Heart right ventricle (tissue), 16 donors: ENCODE measurements at regions of chr13 and their contacts with region 1.

Region 1: DNA sequence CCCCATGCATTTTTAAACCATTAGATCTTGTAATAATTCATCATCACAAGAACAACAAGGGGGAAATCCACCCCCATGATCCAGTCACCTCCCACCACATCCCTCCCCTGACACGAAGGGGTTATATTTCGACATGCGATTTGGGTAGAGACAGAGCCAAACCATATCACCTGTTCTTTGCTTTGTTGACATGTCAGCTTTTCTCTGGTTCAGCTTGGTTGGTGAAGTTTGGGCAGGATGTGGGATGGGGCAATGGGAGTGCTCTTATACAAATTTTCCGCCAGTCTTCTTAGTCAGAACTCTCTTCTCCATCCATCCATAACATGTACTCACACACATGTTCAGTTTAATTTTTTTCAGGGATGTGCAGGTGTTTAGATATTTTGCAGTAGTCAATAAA is 12.9 kb downstream of the TPP2 start:
- DNase-seq: no peak
- ATAC-seq: no peak
- H3K4me3 ChIP-seq: no peak overlapping the region
- H3K27ac ChIP-seq: no peak overlapping the region
- H3K4me1 ChIP-seq: peaks cover 0 to 32% (median 8%) of the 10 kb centered on the region in 9 donors
- H3K27me3 ChIP-seq: no peaks in the 10 kb centered on the region
- CTCF ChIP-seq: no peak

Region 2: DNA sequence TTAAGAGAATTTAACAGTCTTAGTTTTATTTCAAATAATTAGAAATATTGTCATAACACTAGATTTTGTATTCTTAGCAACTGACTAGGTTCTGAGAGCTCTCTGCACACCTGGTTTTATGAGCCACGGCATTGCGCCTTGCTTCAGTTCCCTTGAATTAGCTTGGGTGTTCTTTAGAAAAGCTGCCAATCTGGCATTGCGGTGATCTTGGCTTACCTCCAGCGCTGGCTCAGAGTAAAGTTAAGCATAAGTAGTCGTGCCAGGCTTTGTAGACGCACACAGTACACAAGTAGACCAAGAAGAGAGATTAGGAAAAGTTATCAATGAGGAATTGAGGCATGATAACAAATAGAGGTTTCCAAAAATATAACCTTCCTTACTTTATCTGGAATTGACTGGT is 32.8 kb after region 1 on chr13:
- intact Hi-C with region 1: loop called in 1 of 10 experiments (anchors 5 kb)
- DNase-seq: peak; percentile 54 to 57
- ATAC-seq: peak in 6 of 8 donors; percentile 75 to 91 (median 88)
- H3K4me3 ChIP-seq: no peak overlapping the region
- H3K27ac ChIP-seq: peak overlapping the region in 1 of 10 donors; percentile 11
- H3K4me1 ChIP-seq: peaks cover 0 to 27% (median 10%) of the 10 kb centered on the region in 9 donors
- H3K27me3 ChIP-seq: no peaks in the 10 kb centered on the region
- CTCF ChIP-seq: no peak

Region 3: GRCh38 chr13:103140001-103140671 is 530.4 kb after region 1 on chr13:
- intact Hi-C with region 1: no loop called
- DNase-seq: no peak
- ATAC-seq: no peak
- H3K4me3 ChIP-seq: no peak overlapping the region
- H3K27ac ChIP-seq: no peak overlapping the region
- H3K4me1 ChIP-seq: no peaks in the 10 kb centered on the region
- H3K27me3 ChIP-seq: no peaks in the 10 kb centered on the region
- CTCF ChIP-seq: peak; percentile 15 to 52 (median 42)